T-cell (primary cell): ENCODE measurements at regions of chr1 and their contacts with region 1.

Region 1: GRCh38 chr1:238991765-238992495 is 394.4 kb upstream of the CHRM3 start:
- DNase-seq: no peak
- ATAC-seq: no peak
- H3K4me3 ChIP-seq: no peak overlapping the region
- H3K4me3 Mint-ChIP-seq: no peak overlapping the region
- H3K27ac ChIP-seq: no peak overlapping the region
- H3K27ac Mint-ChIP-seq: no peak overlapping the region
- H3K4me1 ChIP-seq: no peaks in the 10 kb centered on the region
- H3K4me1 Mint-ChIP-seq: no peaks in the 10 kb centered on the region
- H3K27me3 ChIP-seq: no peaks in the 10 kb centered on the region
- H3K27me3 Mint-ChIP-seq: no peaks in the 10 kb centered on the region

Region 2: GRCh38 chr1:238171985-238172384 is 819.9 kb before region 1 on chr1:
- CTCF ChIA-PET with region 1: no interaction called
- POLR2A ChIA-PET with region 1: no interaction called
- DNase-seq: no peak
- ATAC-seq: no peak
- H3K4me3 ChIP-seq: no peak overlapping the region
- H3K4me3 Mint-ChIP-seq: no peak overlapping the region
- H3K27ac ChIP-seq: no peak overlapping the region
- H3K27ac Mint-ChIP-seq: no peak overlapping the region
- H3K4me1 ChIP-seq: no peaks in the 10 kb centered on the region
- H3K4me1 Mint-ChIP-seq: no peaks in the 10 kb centered on the region
- H3K27me3 ChIP-seq: no peaks in the 10 kb centered on the region
- H3K27me3 Mint-ChIP-seq: no peaks in the 10 kb centered on the region

Region 3: DNA sequence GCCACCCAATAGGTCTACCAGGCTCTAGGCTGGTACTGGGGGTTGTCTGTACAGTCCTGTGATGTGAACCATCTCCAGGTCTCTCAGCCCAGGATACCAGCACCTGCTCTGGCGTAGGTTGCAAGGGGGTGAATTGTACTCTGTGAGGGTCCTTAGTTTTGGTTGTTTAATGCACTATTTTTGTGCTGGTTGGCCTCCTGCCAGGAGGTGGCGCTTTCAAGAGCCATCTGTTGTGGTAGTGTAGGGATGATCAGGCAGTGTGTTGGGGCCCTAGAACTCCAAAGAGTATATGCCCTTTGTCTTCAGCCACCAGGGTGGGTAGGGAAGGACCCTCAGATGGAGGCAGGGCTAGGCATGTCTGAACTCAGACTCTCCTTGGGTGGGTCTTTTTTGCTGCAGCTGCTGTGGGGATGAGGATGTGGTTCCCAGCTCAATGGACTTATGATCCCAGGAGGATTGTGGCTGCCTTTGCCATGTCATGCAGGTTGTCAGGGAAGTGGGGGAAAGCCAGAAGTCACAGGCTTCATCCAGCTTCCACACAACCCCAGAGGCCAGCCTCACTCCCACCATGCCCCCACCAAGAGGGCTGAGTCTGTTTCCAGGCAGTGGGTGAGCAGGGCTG is 92.6 kb after region 1 on chr1:
- CTCF ChIA-PET with region 1: no interaction called
- POLR2A ChIA-PET with region 1: no interaction called
- DNase-seq: no peak
- ATAC-seq: no peak
- H3K4me3 ChIP-seq: no peak overlapping the region
- H3K4me3 Mint-ChIP-seq: no peak overlapping the region
- H3K27ac ChIP-seq: no peak overlapping the region
- H3K27ac Mint-ChIP-seq: no peak overlapping the region
- H3K4me1 ChIP-seq: no peaks in the 10 kb centered on the region
- H3K4me1 Mint-ChIP-seq: no peaks in the 10 kb centered on the region
- H3K27me3 ChIP-seq: no peaks in the 10 kb centered on the region
- H3K27me3 Mint-ChIP-seq: no peaks in the 10 kb centered on the region

Region 4: GRCh38 chr1:239125027-239125426 is 133.1 kb after region 1 on chr1:
- CTCF ChIA-PET with region 1: no interaction called
- POLR2A ChIA-PET with region 1: no interaction called
- DNase-seq: no peak
- ATAC-seq: no peak
- H3K4me3 ChIP-seq: no peak overlapping the region
- H3K4me3 Mint-ChIP-seq: no peak overlapping the region
- H3K27ac ChIP-seq: no peak overlapping the region
- H3K27ac Mint-ChIP-seq: no peak overlapping the region
- H3K4me1 ChIP-seq: no peaks in the 10 kb centered on the region
- H3K4me1 Mint-ChIP-seq: no peaks in the 10 kb centered on the region
- H3K27me3 ChIP-seq: no peaks in the 10 kb centered on the region
- H3K27me3 Mint-ChIP-seq: no peaks in the 10 kb centered on the region

Region 5: GRCh38 chr1:240258910-240259309 is 1267.0 kb after region 1 on chr1:
- CTCF ChIA-PET with region 1: interaction called in 1 of 2 experiments, 10 read pairs
- POLR2A ChIA-PET with region 1: no interaction called
- DNase-seq: no peak
- ATAC-seq: no peak
- H3K4me3 ChIP-seq: no peak overlapping the region
- H3K4me3 Mint-ChIP-seq: no peak overlapping the region
- H3K27ac ChIP-seq: no peak overlapping the region
- H3K27ac Mint-ChIP-seq: no peak overlapping the region
- H3K4me1 ChIP-seq: no peaks in the 10 kb centered on the region
- H3K4me1 Mint-ChIP-seq: no peaks in the 10 kb centered on the region
- H3K27me3 ChIP-seq: peaks cover 0 to 7% of the 10 kb centered on the region in 2 experiments
- H3K27me3 Mint-ChIP-seq: no peaks in the 10 kb centered on the region